ENCODE measurements at regions of chr12 and their contacts with region 1.

Region 1: GRCh38 chr12:19572920-19573558 is 133.7 kb downstream of the AEBP2 start:
- DNase-seq: peak; percentile 83
- H3K4me3 ChIP-seq: no peak overlapping the region
- H3K27ac ChIP-seq: peak overlapping the region; percentile 76
- H3K4me1 ChIP-seq: peaks cover 55% of the 10 kb centered on the region
- H3K27me3 ChIP-seq: no peaks in the 10 kb centered on the region
- CTCF ChIP-seq: peak; percentile 80

Region 2: DNA sequence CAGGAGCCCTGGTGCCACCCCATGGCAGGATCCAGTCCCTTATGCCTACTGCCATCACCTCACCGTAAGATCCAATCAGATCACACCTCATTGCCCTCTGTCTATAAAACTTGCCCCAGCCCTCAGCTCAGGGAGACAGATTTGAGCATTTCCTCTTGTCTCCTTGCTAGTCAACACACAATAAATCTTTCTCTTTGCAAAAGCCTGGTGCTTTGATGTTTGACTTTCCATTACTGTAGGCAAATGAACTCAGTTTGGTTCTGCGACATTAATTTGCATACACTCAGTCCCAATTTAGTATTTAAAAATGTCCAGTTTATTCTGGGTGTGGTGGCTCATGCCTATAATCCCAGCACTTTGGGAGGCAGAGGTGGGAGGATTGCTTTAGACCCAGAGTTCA is 54.7 kb after region 1 on chr12:
- CTCF ChIA-PET with region 1: interaction called, 4 read pairs
- POLR2A ChIA-PET with region 1: no interaction called
- intact Hi-C with region 1: loop called (anchors 5 kb)
- DNase-seq: peak; percentile 28
- H3K4me3 ChIP-seq: no peak overlapping the region
- H3K27ac ChIP-seq: peak overlapping the region; percentile 97
- H3K4me1 ChIP-seq: peaks cover 50% of the 10 kb centered on the region
- H3K27me3 ChIP-seq: no peaks in the 10 kb centered on the region
- CTCF ChIP-seq: no peak

Region 3: DNA sequence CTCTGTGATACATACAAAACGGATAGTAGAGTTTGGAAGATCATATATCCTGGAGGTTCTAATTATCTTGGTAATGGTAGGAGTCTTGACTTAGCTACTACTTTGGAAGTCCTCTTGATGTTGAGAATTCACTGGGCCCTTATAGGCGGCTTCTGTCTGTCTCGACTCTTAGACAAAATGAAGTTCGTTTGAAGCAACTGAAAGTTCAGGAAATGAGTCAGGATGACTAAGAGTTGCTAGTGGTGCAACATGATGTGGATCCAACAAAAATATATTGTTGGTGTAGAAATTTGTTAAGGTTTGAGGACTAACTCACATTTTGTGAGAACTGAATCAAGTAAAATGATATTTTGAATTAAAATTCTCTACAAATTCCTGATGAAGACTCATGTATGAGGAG is 139.0 kb after region 1 on chr12:
- CTCF ChIA-PET with region 1: interaction called, 3 read pairs
- POLR2A ChIA-PET with region 1: no interaction called
- intact Hi-C with region 1: loop called (anchors 10 kb)
- DNase-seq: peak; percentile 70
- H3K4me3 ChIP-seq: no peak overlapping the region
- H3K27ac ChIP-seq: no peak overlapping the region
- H3K4me1 ChIP-seq: no peaks in the 10 kb centered on the region
- H3K27me3 ChIP-seq: no peaks in the 10 kb centered on the region
- CTCF ChIP-seq: no peak

Region 4: GRCh38 chr12:19744734-19745218 is 171.7 kb after region 1 on chr12:
- CTCF ChIA-PET with region 1: no interaction called
- POLR2A ChIA-PET with region 1: no interaction called
- intact Hi-C with region 1: loop called (anchors 5 kb)
- DNase-seq: no peak
- H3K4me3 ChIP-seq: no peak overlapping the region
- H3K27ac ChIP-seq: no peak overlapping the region
- H3K4me1 ChIP-seq: no peaks in the 10 kb centered on the region
- H3K27me3 ChIP-seq: peaks cover 5% of the 10 kb centered on the region
- CTCF ChIP-seq: no peak

Region 5: GRCh38 chr12:20369305-20370005 is 796.4 kb after region 1 on chr12:
- CTCF ChIA-PET with region 1: no interaction called
- POLR2A ChIA-PET with region 1: no interaction called
- intact Hi-C with region 1: loop called (anchors 10 kb)
- DNase-seq: peak; percentile 49
- H3K4me3 ChIP-seq: peak overlapping the region; percentile 55
- H3K27ac ChIP-seq: no peak overlapping the region
- H3K4me1 ChIP-seq: peaks cover 4% of the 10 kb centered on the region
- H3K27me3 ChIP-seq: peaks cover 60% of the 10 kb centered on the region
- CTCF ChIP-seq: no peak

Region 6: GRCh38 chr12:21370845-21371449 is 1797.9 kb after region 1 on chr12:
- CTCF ChIA-PET with region 1: no interaction called
- POLR2A ChIA-PET with region 1: no interaction called
- intact Hi-C with region 1: no loop called
- DNase-seq: no peak
- H3K4me3 ChIP-seq: no peak overlapping the region
- H3K27ac ChIP-seq: no peak overlapping the region
- H3K4me1 ChIP-seq: no peaks in the 10 kb centered on the region
- H3K27me3 ChIP-seq: peaks cover 15% of the 10 kb centered on the region
- CTCF ChIP-seq: no peak

Measured in A673 (cell line).